ENCODE measurements at regions of chr12 and their contacts with region 1.

Region 1: GRCh38 chr12:89524541-89525285 is at the start of gene GALNT4:
- DNase-seq: peak; percentile 61 to 78 (median 74)
- ATAC-seq: peak; percentile 87
- H3K4me3 ChIP-seq: peak within 1 kb of the TSS; percentile 90
- H3K4me3 Mint-ChIP-seq: peak within 1 kb of the TSS; percentile 87 to 98 (median 96)
- H3K27ac ChIP-seq: peak within 1 kb of the TSS; percentile 77
- H3K27ac Mint-ChIP-seq: peak within 1 kb of the TSS; percentile 67 to 96 (median 89)
- H3K4me1 ChIP-seq: peaks cover 30 to 35% of the 10 kb centered on the region in 2 donors
- H3K4me1 Mint-ChIP-seq: peaks cover 30 to 66% (median 55%) of the 10 kb centered on the region in 7 donors
- H3K27me3 ChIP-seq: no peaks in the 10 kb centered on the region
- H3K27me3 Mint-ChIP-seq: no peaks in the 10 kb centered on the region
- total RNA-seq, gene GALNT4: 6.0 to 14.5 (median 9.9) TPM

Region 2: GRCh38 chr12:88111074-88111652 is 1413.5 kb before region 1 on chr12:
- CTCF ChIA-PET with region 1: no interaction called
- POLR2A ChIA-PET with region 1: no interaction called
- intact Hi-C with region 1: loop called (anchors 1 to 10 kb)
- DNase-seq: peak in 4 of 9 donors; percentile 6 to 22 (median 17)
- ATAC-seq: no peak
- H3K4me3 ChIP-seq: no peak overlapping the region
- H3K4me3 Mint-ChIP-seq: peak overlapping the region in 3 of 10 donors; percentile 30 to 46 (median 45)
- H3K27ac ChIP-seq: no peak overlapping the region
- H3K27ac Mint-ChIP-seq: peak overlapping the region in 1 of 9 donors; percentile 52
- H3K4me1 ChIP-seq: no peaks in the 10 kb centered on the region
- H3K4me1 Mint-ChIP-seq: peaks cover 0 to 4% (median 0%) of the 10 kb centered on the region in 7 donors
- H3K27me3 ChIP-seq: no peaks in the 10 kb centered on the region
- H3K27me3 Mint-ChIP-seq: no peaks in the 10 kb centered on the region

Region 3: DNA sequence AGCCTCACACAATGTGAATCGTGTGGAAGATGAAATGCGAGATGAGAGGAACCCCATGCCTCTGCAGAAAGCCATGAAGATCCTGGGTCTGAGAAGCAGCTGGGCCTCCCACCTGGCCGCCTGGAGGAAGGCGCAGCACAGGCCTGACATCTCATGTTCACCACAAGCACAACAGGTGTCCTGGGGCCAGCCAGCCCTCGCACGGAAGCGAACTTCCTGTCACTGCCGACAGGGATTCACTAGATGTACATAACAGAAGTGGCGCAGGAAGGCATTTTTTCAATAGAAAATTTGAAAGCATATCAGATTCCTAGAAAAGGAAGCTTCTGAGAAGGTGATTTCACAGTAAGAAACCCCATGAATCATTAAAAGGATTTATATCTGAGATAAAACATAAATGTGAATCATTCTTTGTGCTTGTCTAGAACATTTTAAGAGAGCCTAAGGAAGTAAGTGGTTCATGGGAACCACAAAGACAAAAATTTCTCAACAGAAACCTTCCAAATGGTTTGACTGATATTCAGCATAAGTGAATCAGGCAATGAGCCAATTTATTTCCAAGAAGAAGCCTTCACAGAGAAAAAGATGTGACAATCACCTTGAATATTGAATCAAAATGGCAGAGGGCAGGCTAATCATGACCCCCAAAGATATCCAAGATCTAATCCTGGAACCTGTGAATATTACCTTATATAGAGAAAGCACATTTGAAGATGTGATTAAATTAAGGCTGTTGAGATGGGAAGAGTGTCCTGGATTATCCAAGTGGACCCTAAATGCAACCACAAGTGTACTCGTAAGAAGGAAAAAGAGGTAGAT is 484.4 kb before region 1 on chr12:
- CTCF ChIA-PET with region 1: interaction called, 4 read pairs
- POLR2A ChIA-PET with region 1: no interaction called
- intact Hi-C with region 1: loop called in 1 of 2 experiments (anchors 1 kb)
- DNase-seq: peak; percentile 13 to 76 (median 43)
- ATAC-seq: peak; percentile 93
- H3K4me3 ChIP-seq: no peak overlapping the region
- H3K4me3 Mint-ChIP-seq: peak overlapping the region; percentile 29 to 77 (median 54)
- H3K27ac ChIP-seq: no peak overlapping the region
- H3K27ac Mint-ChIP-seq: peak overlapping the region; percentile 1 to 88 (median 68)
- H3K4me1 ChIP-seq: peaks cover 7 to 12% of the 10 kb centered on the region in 2 donors
- H3K4me1 Mint-ChIP-seq: peaks cover 21 to 60% (median 31%) of the 10 kb centered on the region in 7 donors
- H3K27me3 ChIP-seq: no peaks in the 10 kb centered on the region
- H3K27me3 Mint-ChIP-seq: no peaks in the 10 kb centered on the region

Region 4: DNA sequence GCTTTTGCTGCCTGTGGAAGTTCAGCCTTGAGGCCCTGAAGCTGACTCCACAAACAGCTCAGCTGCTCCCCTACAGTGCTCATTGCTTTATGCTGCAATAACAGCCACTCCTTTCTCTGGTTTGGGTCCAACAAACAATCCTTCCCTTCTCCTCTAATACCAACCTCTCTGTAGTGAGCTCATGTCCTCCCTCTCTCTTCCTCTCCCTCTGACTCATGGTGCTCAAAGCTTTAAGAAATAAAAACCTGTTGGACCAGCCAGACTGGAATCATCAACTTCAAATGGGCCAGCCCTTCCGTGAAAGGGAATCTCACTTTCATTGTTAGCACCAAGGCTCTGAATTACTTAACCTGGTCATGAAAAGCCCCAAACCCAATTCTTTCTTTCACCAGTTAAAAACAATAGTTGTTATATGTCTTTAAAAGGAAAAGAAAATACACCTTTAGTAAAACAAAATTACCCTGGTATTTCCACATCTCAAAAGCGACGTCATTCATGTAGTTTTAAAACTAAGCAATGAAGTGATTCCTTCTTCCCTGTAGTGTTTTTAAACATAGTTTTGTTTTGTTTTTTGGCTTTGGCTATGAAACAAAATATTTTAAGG is 298.8 kb before region 1 on chr12:
- CTCF ChIA-PET with region 1: no interaction called
- POLR2A ChIA-PET with region 1: no interaction called
- intact Hi-C with region 1: loop called in 1 of 2 experiments (anchors 5 kb)
- DNase-seq: peak in 1 of 9 donors; percentile 47
- ATAC-seq: peak; percentile 26
- H3K4me3 ChIP-seq: no peak overlapping the region
- H3K4me3 Mint-ChIP-seq: peak overlapping the region in 8 of 10 donors; percentile 26 to 74 (median 54)
- H3K27ac ChIP-seq: no peak overlapping the region
- H3K27ac Mint-ChIP-seq: peak overlapping the region; percentile 38 to 94 (median 63)
- H3K4me1 ChIP-seq: peaks cover 16 to 17% of the 10 kb centered on the region in 2 donors
- H3K4me1 Mint-ChIP-seq: peaks cover 18 to 76% (median 48%) of the 10 kb centered on the region in 7 donors
- H3K27me3 ChIP-seq: no peaks in the 10 kb centered on the region
- H3K27me3 Mint-ChIP-seq: no peaks in the 10 kb centered on the region

Region 5: DNA sequence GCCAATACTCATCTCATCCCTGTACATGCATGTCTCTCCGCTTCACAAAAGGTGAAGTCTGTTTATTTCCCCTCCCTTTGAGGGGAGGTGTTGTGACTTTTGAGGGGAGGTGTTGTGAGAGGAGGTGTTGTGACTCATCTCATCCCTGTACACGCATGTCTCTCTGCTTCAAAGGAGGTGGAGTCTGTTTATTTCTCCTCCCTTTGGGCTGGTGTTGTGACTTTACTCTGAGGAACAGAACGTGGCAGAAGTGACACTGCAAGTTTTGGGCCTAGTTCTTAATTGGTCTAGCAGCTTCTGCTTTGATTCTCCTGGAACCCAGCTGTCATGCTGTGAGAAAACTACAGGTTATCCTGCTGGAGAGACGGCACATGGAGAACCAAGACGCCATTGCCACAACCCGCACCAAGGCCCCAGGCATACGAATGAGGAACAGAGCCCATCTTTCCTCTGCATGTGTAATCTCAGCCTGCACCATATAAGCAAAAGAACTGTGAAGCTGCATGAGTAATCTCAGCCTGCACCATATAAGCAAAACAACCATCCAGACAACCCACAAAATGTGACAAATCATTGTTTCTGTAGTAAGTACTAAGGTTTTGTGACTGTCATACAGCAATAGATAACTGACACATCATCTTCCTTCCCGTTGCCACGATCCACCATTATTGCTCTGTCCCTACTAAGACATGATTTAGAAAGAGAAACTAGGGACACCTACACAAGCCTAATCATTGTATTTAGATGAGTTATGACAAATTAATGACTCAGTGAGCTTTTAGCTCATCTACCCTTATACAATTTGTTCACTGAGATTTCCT is 30.1 kb before region 1 on chr12:
- CTCF ChIA-PET with region 1: no interaction called
- POLR2A ChIA-PET with region 1: interaction called, 3 read pairs
- intact Hi-C with region 1: loop called in 1 of 2 experiments (anchors 1 kb)
- DNase-seq: peak in 1 of 9 donors; percentile 38
- ATAC-seq: peak; percentile 57
- H3K4me3 ChIP-seq: no peak overlapping the region
- H3K4me3 Mint-ChIP-seq: peak overlapping the region in 1 of 10 donors; percentile 55
- H3K27ac ChIP-seq: no peak overlapping the region
- H3K27ac Mint-ChIP-seq: peak overlapping the region in 2 of 9 donors; percentile 13 to 85
- H3K4me1 ChIP-seq: no peaks in the 10 kb centered on the region
- H3K4me1 Mint-ChIP-seq: peaks cover 0 to 28% (median 5%) of the 10 kb centered on the region in 7 donors
- H3K27me3 ChIP-seq: no peaks in the 10 kb centered on the region
- H3K27me3 Mint-ChIP-seq: no peaks in the 10 kb centered on the region

Region 6: GRCh38 chr12:89882050-89882449 is 357.3 kb after region 1 on chr12:
- CTCF ChIA-PET with region 1: no interaction called
- POLR2A ChIA-PET with region 1: no interaction called
- intact Hi-C with region 1: loop called in 1 of 2 experiments (anchors 2 kb)
- DNase-seq: no peak
- ATAC-seq: peak; percentile 31
- H3K4me3 ChIP-seq: no peak overlapping the region
- H3K4me3 Mint-ChIP-seq: peak overlapping the region in 7 of 10 donors; percentile 30 to 83 (median 75)
- H3K27ac ChIP-seq: peak overlapping the region; percentile 28
- H3K27ac Mint-ChIP-seq: peak overlapping the region; percentile 82 to 95 (median 91)
- H3K4me1 ChIP-seq: peaks cover 31 to 36% of the 10 kb centered on the region in 2 donors
- H3K4me1 Mint-ChIP-seq: peaks cover 23 to 62% (median 57%) of the 10 kb centered on the region in 7 donors
- H3K27me3 ChIP-seq: no peaks in the 10 kb centered on the region
- H3K27me3 Mint-ChIP-seq: peaks cover 0 to 3% (median 0%) of the 10 kb centered on the region in 5 donors

Measured in naive thymus-derived CD4-positive, alpha-beta T cell (primary cell).